Pancreas (tissue), 10 donors: ENCODE measurements at regions of chr14 and their contacts with region 1.

Region 1: DNA sequence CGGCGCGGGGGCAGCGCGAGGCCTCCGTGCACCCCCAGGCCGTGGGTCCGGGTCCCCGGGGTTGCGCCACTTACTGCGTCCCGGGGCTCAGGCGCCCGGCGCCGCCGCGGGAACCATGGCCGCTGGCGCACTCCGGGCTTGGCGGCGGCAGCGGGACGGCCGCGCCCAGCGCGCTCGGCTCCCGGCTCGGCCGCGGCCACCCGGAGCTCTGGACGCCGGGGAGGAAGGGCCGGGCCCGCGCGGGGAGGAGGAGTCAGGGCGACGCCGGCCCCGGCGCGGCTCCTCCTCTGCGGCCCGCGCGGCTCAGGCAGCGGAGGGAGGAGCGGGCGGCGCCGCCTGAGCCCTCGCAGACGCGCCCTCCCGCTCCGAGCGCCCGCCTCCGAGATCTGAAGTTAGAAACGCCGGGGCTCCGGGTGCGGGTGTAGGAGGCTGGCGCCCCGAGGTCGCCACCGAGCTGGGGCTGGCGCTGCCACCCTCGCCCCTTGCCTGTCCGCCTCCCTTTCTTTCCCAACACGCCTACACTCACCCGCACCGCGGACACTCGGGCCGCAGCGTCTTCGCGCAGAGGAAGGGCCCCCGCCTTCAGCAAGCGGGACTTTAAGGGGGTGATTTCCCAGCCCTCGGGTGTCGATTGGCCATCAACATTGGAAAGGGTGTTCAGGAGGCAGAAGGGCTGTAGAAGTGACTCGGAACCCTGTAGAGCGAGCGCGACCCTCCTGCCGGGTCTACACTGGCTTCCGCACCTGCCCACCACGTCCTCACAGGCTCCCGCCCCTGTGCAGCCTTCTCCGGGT is at the start of gene NIN:
- DNase-seq: peak; percentile 72 to 92 (median 78)
- ATAC-seq: peak; percentile 93 to 98 (median 97)
- H3K4me3 ChIP-seq: peak within 1 kb of the TSS; percentile 62 to 88 (median 74)
- H3K27ac ChIP-seq: peak within 1 kb of the TSS in 3 of 4 donors; percentile 60 to 69 (median 65)
- H3K4me1 ChIP-seq: peaks cover 0 to 12% (median 7%) of the 10 kb centered on the region in 3 donors
- H3K27me3 ChIP-seq: no peaks in the 10 kb centered on the region
- CTCF ChIP-seq: no peak
- total RNA-seq, gene NIN: 7.1 to 17.9 (median 8.6) TPM

Region 2: DNA sequence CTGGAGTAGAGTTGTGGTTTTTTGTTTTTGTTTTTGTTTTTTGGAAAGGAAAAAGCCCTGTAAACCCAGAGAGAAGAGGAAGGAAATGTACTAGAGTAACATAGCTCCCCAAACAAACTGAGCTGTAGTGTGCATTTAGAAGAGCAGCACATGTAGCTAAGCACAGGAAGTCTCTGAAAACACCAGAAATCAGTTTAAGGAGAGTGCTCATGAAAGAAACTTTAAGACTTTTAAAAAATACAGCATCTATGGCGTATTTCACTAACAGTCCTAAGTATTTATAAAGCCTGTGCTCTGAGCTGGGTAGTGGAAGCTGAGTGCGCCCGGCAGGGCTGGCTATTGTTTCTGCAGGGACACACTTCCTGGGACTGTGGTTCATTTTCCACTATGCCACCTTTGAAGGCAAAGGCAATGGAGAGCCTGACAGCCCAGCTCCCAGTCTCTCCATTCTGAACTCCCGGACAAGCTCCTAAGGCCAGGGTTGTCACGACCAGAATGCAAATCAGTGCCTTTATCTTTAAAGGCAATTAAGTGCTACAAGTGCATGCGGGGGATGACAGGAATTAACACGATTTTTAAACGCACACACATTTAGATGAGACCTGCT is 45.6 kb before region 1 on chr14:
- intact Hi-C with region 1: loop called in 1 of 3 experiments (anchors 10 kb)
- DNase-seq: no peak
- ATAC-seq: no peak
- H3K4me3 ChIP-seq: no peak overlapping the region
- H3K27ac ChIP-seq: no peak overlapping the region
- H3K4me1 ChIP-seq: peaks cover 0 to 4% (median 0%) of the 10 kb centered on the region in 3 donors
- H3K27me3 ChIP-seq: no peaks in the 10 kb centered on the region
- CTCF ChIP-seq: no peak